SK-N-SH (cell line): ENCODE measurements at regions of chr7 and their contacts with region 1.

Region 1: DNA sequence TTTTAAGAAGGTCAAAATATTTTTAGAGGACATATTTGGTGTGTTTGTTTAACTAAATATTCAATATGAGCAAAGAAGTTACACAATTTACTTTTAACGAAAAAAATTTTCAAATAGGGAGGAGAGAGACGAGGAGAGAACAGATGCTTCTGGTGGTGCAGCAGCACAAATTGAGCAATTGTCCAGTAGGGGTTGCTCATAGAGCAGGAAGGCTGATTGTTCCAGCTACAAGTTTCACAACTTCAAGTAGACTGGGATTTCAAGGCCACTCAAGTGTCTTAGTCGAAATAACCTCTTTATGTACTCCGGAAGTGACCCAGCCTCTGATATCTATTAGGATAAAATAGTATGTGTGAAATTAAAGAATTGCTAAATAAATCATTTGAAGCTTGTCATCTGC is 197.9 kb downstream of the HDAC9 start:
- DNase-seq: peak; percentile 25
- H3K4me3 ChIP-seq: no peak overlapping the region
- H3K27ac ChIP-seq: peak overlapping the region in 1 of 2 experiments; percentile 95; a peak in 2 of 4 replicates
- H3K4me1 ChIP-seq: peaks cover 0 to 45% of the 10 kb centered on the region in 2 experiments; a peak in 3 of 4 replicates
- H3K27me3 ChIP-seq: no peaks in the 10 kb centered on the region
- CTCF ChIP-seq: peak; percentile 97
- EP300 ChIP-seq: peak in 1 of 2 experiments; percentile 46; a peak in 1 of 4 replicates
- RAD21 ChIP-seq: peak; percentile 99

Region 2: DNA sequence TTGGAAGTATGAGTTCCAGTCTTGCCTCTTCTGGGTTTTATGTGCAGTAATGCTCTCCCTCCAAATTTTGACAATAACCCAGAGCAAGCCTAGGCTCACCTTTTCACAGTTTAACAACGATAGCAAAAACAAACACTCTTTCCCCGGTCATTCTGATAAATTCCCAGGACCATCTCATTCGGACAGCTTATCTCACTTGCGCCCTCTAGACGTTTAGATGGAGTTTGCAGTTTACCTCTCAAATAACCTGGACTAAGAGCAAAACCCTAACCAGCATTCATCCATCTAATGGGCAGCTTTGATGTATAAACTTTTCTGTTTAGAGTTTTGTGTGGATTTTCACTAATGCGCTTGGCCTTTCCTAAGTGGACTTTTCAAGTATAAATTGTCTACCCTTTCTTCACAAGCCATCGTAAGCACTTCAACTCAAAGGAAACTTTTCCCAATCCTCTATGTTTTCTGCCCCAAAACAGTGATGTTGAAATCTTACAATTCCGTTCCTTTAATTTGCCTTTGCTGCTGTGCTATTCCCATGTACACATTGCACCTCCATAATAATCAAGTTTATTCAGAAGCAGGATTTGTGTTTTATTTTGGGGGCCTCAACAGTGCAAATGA is 83.0 kb before region 1 on chr7:
- CTCF ChIA-PET with region 1: no interaction called
- POLR2A ChIA-PET with region 1: no interaction called
- DNase-seq: peak; percentile 11
- H3K4me3 ChIP-seq: no peak overlapping the region; a peak in 1 of 4 replicates
- H3K27ac ChIP-seq: no peak overlapping the region
- H3K4me1 ChIP-seq: peaks cover 0 to 4% of the 10 kb centered on the region in 2 experiments; a peak in 2 of 4 replicates
- H3K27me3 ChIP-seq: no peaks in the 10 kb centered on the region
- CTCF ChIP-seq: peak; percentile 66
- EP300 ChIP-seq: no peak
- RAD21 ChIP-seq: peak; percentile 37

Region 3: GRCh38 chr7:18666107-18666728 is 27.2 kb before region 1 on chr7:
- CTCF ChIA-PET with region 1: interaction called, 14 read pairs
- POLR2A ChIA-PET with region 1: no interaction called
- DNase-seq: peak; percentile 53
- H3K4me3 ChIP-seq: no peak overlapping the region
- H3K27ac ChIP-seq: peak overlapping the region; percentile 81 to 82
- H3K4me1 ChIP-seq: peaks cover 9 to 16% of the 10 kb centered on the region in 2 experiments; a peak in 3 of 4 replicates
- H3K27me3 ChIP-seq: no peaks in the 10 kb centered on the region
- CTCF ChIP-seq: peak; percentile 100
- EP300 ChIP-seq: no peak
- RAD21 ChIP-seq: peak; percentile 81

Region 4: GRCh38 chr7:18803923-18804322 is 110.5 kb after region 1 on chr7:
- CTCF ChIA-PET with region 1: interaction called, 15 read pairs
- POLR2A ChIA-PET with region 1: interaction called, 6 read pairs
- DNase-seq: peak; percentile 48
- H3K4me3 ChIP-seq: no peak overlapping the region
- H3K27ac ChIP-seq: peak overlapping the region in 1 of 2 experiments; percentile 96; a peak in 2 of 4 replicates
- H3K4me1 ChIP-seq: peaks cover 0 to 32% of the 10 kb centered on the region in 2 experiments; a peak in 2 of 4 replicates
- H3K27me3 ChIP-seq: no peaks in the 10 kb centered on the region
- CTCF ChIP-seq: no peak
- EP300 ChIP-seq: peak; percentile 23 to 99; a peak in 2 of 4 replicates
- RAD21 ChIP-seq: peak; percentile 54

Region 5: GRCh38 chr7:18846765-18847215 is 153.4 kb after region 1 on chr7:
- CTCF ChIA-PET with region 1: interaction called, 30 read pairs
- POLR2A ChIA-PET with region 1: interaction called, 17 read pairs
- DNase-seq: peak; percentile 75
- H3K4me3 ChIP-seq: no peak overlapping the region
- H3K27ac ChIP-seq: peak overlapping the region; percentile 60 to 100; a peak in 3 of 4 replicates
- H3K4me1 ChIP-seq: peaks cover 23 to 52% of the 10 kb centered on the region in 2 experiments
- H3K27me3 ChIP-seq: no peaks in the 10 kb centered on the region
- CTCF ChIP-seq: no peak
- EP300 ChIP-seq: peak; percentile 96 to 100
- RAD21 ChIP-seq: peak; percentile 60

Region 6: DNA sequence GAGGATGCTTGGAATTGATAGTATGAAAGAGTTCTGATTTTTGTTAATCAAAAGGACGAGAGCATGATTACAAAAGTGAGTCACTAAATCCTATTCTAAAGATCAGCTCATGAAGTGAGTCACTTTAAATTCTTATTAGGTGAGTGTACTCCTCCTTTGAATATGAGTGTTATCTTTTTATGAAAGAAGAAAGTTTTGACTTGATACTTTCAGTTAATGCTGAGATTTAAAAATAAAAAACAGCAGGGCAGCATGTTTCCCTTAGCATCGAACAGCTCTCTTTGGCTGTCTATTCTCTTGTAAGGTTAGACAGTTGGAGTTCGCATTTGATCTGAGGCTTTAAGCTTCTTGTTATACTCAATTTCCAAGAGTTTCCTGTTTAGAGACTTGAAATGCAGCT is 202.1 kb after region 1 on chr7:
- CTCF ChIA-PET with region 1: interaction called, 21 read pairs
- POLR2A ChIA-PET with region 1: interaction called, 19 read pairs
- DNase-seq: no peak
- H3K4me3 ChIP-seq: peak overlapping the region; percentile 26 to 33; a peak in 3 of 4 replicates
- H3K27ac ChIP-seq: peak overlapping the region; percentile 90 to 100
- H3K4me1 ChIP-seq: peaks cover 18 to 63% of the 10 kb centered on the region in 2 experiments; a peak in 3 of 4 replicates
- H3K27me3 ChIP-seq: no peaks in the 10 kb centered on the region
- CTCF ChIP-seq: no peak
- EP300 ChIP-seq: peak in 1 of 2 experiments; percentile 94; a peak in 2 of 4 replicates
- RAD21 ChIP-seq: no peak

Region 7: GRCh38 chr7:19090526-19090925 is 397.1 kb after region 1 on chr7:
- CTCF ChIA-PET with region 1: interaction called, 17 read pairs
- POLR2A ChIA-PET with region 1: no interaction called
- DNase-seq: no peak
- H3K4me3 ChIP-seq: no peak overlapping the region
- H3K27ac ChIP-seq: peak overlapping the region; percentile 70 to 100
- H3K4me1 ChIP-seq: peaks cover 36 to 55% of the 10 kb centered on the region in 2 experiments
- H3K27me3 ChIP-seq: no peaks in the 10 kb centered on the region
- CTCF ChIP-seq: no peak
- EP300 ChIP-seq: peak in 1 of 2 experiments; percentile 43; a peak in 1 of 4 replicates
- RAD21 ChIP-seq: no peak

Region 8: GRCh38 chr7:19107356-19108146 is 414.1 kb after region 1 on chr7:
- CTCF ChIA-PET with region 1: interaction called, 28 read pairs
- POLR2A ChIA-PET with region 1: interaction called, 30 read pairs
- DNase-seq: peak; percentile 77
- H3K4me3 ChIP-seq: peak overlapping the region; percentile 92 to 100
- H3K27ac ChIP-seq: peak overlapping the region; percentile 96 to 100
- H3K4me1 ChIP-seq: peaks cover 21 to 79% of the 10 kb centered on the region in 2 experiments; a peak in 3 of 4 replicates
- H3K27me3 ChIP-seq: no peaks in the 10 kb centered on the region
- CTCF ChIP-seq: no peak
- EP300 ChIP-seq: peak in 1 of 2 experiments; percentile 97; a peak in 3 of 4 replicates
- RAD21 ChIP-seq: no peak; the same call in 1 of the 2 replicates